MCF 10A (cell line): ENCODE measurements at regions of chr1 and their contacts with region 1.

Region 1: GRCh38 chr1:78323311-78323710 is 167.5 kb upstream of the PTGFR start:
- DNase-seq: no peak
- H3K4me3 Mint-ChIP-seq: no peak overlapping the region
- H3K27ac Mint-ChIP-seq: no peak overlapping the region
- H3K4me1 Mint-ChIP-seq: no peaks in the 10 kb centered on the region
- H3K27me3 Mint-ChIP-seq: no peaks in the 10 kb centered on the region
- CTCF ChIP-seq: no peak

Region 2: DNA sequence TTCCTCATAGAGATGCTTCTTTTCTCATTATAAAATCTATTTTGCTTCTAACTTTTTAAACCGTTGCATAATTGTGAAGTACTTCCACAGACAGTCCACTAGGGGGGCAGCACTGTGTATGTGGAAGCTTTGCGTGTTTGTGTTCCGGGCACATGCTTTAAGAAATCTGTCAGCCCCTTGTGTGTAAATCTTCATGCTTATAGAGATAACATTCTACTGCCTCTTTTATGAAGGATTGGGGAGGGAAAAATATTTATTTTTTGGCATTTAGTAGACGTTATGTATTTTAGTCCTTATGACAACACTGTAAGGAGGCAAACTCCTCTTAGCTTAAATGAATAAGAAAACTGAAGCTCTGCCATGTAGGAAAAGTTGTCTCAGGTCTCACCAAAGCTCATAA is 10.2 kb after region 1 on chr1:
- CTCF ChIA-PET with region 1: interaction called, 13 read pairs
- POLR2A ChIA-PET with region 1: no interaction called
- intact Hi-C with region 1: no loop called
- DNase-seq: peak; percentile 45
- H3K4me3 Mint-ChIP-seq: no peak overlapping the region
- H3K27ac Mint-ChIP-seq: no peak overlapping the region
- H3K4me1 Mint-ChIP-seq: no peaks in the 10 kb centered on the region
- H3K27me3 Mint-ChIP-seq: no peaks in the 10 kb centered on the region
- CTCF ChIP-seq: peak; percentile 56